RWPE1 (cell line): ENCODE measurements at regions of chr6 and their contacts with region 1.

Region 1: DNA sequence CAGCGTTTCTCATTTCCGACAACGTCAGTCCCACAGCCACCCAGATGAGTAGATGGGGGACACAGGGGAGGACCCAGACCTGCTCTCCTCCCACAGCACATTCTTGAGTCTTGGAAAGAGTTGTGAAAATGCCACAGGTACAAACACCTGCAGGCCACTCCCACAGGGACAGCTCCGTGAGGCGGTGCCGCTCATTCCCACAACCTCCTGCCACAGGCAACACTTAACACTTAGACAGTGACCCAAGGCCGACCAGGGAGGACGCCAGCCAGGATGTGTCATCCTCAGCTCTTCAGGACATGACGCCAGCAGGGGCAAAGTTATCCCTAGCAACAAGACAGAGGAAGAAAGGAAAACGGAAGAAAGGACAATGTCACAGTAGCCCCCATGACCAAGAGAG is 22.9 kb upstream of the HLA-B start:
- DNase-seq: no peak
- H3K27ac ChIP-seq: no peak overlapping the region
- CTCF ChIP-seq: no peak

Region 2: DNA sequence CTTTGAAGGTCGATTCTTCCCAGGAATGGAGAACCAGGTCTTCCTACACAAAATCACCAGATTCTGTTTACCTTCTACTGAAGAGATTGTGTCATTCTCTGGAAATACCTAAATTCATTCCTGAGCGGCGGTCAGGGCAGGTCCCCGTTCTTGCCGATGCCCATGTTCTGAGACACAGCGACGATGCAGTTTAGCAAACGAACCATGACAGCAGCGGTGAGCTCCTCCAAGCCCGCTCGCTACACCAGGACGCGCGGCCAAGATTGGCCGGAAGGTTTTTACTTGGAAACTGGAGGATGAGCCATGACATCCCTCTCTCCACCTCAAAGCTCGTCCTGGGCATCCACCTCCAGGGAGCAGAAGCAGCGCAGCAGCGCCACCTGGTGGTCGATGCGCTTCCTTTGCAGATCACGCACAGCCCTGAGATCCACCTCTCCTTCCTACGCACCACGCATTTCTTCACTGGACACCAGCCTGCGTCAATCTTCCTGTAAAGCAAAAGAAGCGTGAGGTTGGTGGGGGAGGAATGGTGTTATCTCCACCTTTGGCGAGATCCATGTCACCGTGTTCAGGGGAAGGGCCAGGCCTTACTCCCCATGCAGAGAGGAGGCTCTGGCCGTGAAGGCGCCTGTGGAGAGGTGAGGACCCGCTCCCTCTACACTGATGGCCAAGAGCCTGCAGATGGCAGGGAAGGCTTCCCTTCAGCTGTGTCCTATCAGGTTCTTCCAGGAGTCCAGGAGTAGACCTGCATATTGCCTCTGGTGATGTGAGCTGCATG is 13.0 kb before region 1 on chr6:
- CTCF ChIA-PET with region 1: interaction called, 10 read pairs
- POLR2A ChIA-PET with region 1: no interaction called
- DNase-seq: peak; percentile 85
- H3K27ac ChIP-seq: no peak overlapping the region
- CTCF ChIP-seq: peak; percentile 95